Heart left ventricle (tissue), 16 donors: ENCODE measurements at regions of chr14 and their contacts with region 1.

Region 1: GRCh38 chr14:103057365-103058096 is at the start of gene CDC42BPB:
- DNase-seq: peak; percentile 91 to 95 (median 93)
- ATAC-seq: peak; percentile 87 to 96 (median 92)
- H3K4me3 ChIP-seq: peak within 1 kb of the TSS; percentile 88 to 100 (median 97)
- H3K27ac ChIP-seq: peak within 1 kb of the TSS; percentile 88 to 99 (median 96)
- H3K4me1 ChIP-seq: peaks cover 6 to 45% (median 36%) of the 10 kb centered on the region in 12 donors
- H3K27me3 ChIP-seq: no peaks in the 10 kb centered on the region
- CTCF ChIP-seq: no peak
- POLR2A ChIP-seq: peak in 1 of 2 donors; percentile 37
- total RNA-seq, gene CDC42BPB: 58.9 to 124 (median 68.9) TPM

Region 2: DNA sequence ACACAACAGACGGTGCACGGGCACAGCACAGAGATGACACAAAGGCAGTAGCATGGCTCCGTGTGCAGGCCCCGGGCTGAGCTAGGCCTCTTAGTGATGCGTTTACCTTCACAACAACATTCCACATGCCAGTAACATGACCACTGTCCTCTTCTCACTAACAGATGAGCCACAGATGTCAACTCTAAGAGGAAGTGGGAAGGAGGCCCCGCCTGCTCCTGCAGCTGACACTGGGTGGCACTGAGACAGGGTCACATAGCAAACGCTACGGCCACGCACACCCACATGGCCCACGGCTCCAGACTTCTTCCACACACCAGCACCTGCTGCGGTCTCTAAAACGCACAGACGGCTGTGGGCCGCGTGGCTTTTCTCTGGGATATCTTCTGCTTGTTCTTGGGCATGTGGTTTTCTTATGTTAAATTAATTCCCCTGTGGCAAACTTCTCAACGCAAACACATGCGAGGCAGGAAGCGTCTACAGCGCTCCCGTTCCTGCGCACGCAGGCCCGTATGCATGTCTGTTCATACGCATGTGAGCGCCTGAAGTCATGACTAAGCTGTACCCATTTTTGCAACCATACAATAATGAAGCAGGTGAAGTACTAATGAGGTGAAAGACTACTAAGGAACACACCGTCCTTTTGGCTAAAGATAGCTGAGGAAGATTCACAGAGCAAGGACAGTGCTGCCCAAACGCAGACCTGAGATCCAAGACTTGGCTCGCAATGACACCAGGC is 108.3 kb before region 1 on chr14:
- intact Hi-C with region 1: no loop called
- DNase-seq: no peak
- ATAC-seq: peak in 2 of 4 donors; percentile 8 to 17
- H3K4me3 ChIP-seq: no peak overlapping the region
- H3K27ac ChIP-seq: no peak overlapping the region
- H3K4me1 ChIP-seq: peaks cover 0 to 13% (median 3%) of the 10 kb centered on the region in 12 donors
- H3K27me3 ChIP-seq: no peaks in the 10 kb centered on the region
- CTCF ChIP-seq: no peak
- POLR2A ChIP-seq: no peak

Region 3: GRCh38 chr14:103008902-103009569 is 48.5 kb before region 1 on chr14:
- intact Hi-C with region 1: loop called in 2 of 10 experiments (anchors 5 to 10 kb)
- DNase-seq: peak in 2 of 5 donors; percentile 62 to 68
- ATAC-seq: peak; percentile 15 to 63 (median 20)
- H3K4me3 ChIP-seq: no peak overlapping the region
- H3K27ac ChIP-seq: peak overlapping the region in 1 of 12 donors; percentile 30
- H3K4me1 ChIP-seq: peaks cover 0 to 42% (median 15%) of the 10 kb centered on the region in 12 donors
- H3K27me3 ChIP-seq: no peaks in the 10 kb centered on the region
- CTCF ChIP-seq: no peak
- POLR2A ChIP-seq: no peak